HEK293T (cell line): ENCODE measurements at regions of chr16 and their contacts with region 1.

Region 1: GRCh38 chr16:28935924-28936783 is 4.4 kb downstream of the CD19 start:
- DNase-seq: peak; percentile 98

Region 2: DNA sequence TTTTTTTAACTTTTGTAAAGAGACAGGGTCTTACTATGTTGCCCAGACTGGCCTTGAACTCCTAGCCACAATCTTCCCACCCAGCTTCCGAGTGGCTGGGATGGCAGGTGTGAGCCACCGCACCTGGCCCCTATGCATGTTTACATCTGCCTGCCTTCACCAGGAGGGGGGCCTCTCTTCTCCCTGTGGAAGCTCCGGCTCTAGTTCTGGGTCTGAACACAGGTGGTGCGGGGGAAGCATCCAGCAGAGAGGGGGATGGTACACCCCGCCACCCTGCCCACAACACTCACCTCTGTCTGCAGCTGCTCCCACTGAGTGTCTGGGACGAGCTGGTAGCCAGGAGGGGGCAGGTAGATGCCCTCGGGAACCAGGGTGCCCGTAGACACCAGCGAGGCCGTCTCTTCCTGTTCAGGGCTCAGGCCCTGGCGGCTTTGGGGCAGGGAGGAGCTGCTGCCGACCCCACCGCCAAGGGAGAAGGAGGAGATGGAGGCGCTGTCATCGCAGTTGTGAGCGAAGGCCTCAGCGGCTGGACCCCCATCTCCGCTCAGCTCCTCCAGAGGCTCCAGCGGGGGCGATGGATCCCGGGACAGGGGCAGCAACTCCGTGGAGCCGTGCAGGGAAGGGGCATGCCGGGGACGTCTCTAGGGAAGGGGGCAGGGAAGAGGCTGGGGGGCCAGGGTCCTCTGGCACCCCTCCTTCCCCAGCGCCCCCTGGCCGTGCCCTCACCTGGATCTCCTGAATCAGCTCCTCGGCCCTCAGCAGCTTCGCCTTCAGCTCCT is 22.0 kb before region 1 on chr16:
- CTCF ChIA-PET with region 1: no interaction called
- POLR2A ChIA-PET with region 1: no interaction called
- DNase-seq: no peak

Region 3: GRCh38 chr16:28924732-28925385 is 11.3 kb before region 1 on chr16 and contains the start of gene RABEP2:
- CTCF ChIA-PET with region 1: no interaction called
- POLR2A ChIA-PET with region 1: interaction called, 16 read pairs
- DNase-seq: peak; percentile 99